ENCODE measurements at regions of chr12 and their contacts with region 1.

Region 1: GRCh38 chr12:25250744-25251730 is at the start of gene KRAS:
- DNase-seq: peak; percentile 95 to 97 (median 97)
- H3K4me3 ChIP-seq: peak within 1 kb of the TSS; percentile 99
- H3K27ac ChIP-seq: peak within 1 kb of the TSS; percentile 84
- H3K4me1 ChIP-seq: peaks cover 2% of the 10 kb centered on the region
- H3K27me3 ChIP-seq: no peaks in the 10 kb centered on the region
- CTCF ChIP-seq: no peak
- EP300 ChIP-seq: no peak
- POLR2A ChIP-seq: peak; percentile 87
- total RNA-seq, gene KRAS: 8.7 to 28.2 (median 16.4) TPM

Region 2: GRCh38 chr12:25200703-25201102 is 50.3 kb before region 1 on chr12:
- intact Hi-C with region 1: loop called in 1 of 4 experiments (anchors 5 kb)
- DNase-seq: no peak
- H3K4me3 ChIP-seq: no peak overlapping the region
- H3K27ac ChIP-seq: no peak overlapping the region
- H3K4me1 ChIP-seq: peaks cover 1% of the 10 kb centered on the region
- H3K27me3 ChIP-seq: no peaks in the 10 kb centered on the region
- CTCF ChIP-seq: no peak
- EP300 ChIP-seq: no peak
- POLR2A ChIP-seq: no peak